ENCODE measurements at regions of chr6 and their contacts with region 1.

Region 1: DNA sequence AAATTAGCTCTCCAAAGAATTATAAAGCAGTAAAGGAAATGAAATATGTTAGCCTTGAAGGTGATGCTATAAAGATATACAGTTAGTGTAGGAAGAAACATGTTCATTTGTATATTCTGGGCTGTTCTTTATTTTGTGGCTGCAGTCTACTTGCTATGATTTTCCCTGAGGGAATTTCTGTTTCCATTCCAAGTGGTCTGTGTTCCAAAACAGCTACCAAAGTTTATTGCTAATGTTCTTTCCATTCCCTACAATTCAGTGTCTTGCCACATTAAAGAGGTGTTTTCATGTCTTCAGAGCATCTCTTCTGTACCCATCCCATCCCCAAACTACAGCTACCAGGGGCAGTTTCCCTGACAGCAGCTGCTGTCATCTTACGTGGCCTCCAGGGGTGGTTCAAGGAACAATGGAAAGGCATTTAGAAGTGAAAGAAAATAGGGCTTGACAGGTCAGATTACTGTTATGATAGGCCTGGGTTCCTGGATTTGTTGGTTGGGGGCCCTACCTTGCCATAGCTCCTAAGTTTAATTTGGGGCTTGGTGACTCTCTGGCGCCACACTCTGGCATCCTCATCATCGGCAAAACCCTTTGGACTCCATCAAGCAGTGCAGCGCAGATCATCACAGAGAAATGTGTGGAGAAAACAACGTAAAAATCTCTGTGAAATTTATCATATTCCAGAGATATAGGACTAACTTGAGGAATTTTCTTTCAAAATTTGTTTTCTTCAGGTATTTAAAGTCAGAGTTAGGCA is 33.8 kb upstream of the AIG1 start:
- DNase-seq: peak; percentile 35
- H3K4me3 ChIP-seq: no peak overlapping the region
- H3K27ac ChIP-seq: no peak overlapping the region
- H3K4me1 ChIP-seq: no peaks in the 10 kb centered on the region
- H3K27me3 ChIP-seq: no peaks in the 10 kb centered on the region
- CTCF ChIP-seq: peak; percentile 75

Region 2: DNA sequence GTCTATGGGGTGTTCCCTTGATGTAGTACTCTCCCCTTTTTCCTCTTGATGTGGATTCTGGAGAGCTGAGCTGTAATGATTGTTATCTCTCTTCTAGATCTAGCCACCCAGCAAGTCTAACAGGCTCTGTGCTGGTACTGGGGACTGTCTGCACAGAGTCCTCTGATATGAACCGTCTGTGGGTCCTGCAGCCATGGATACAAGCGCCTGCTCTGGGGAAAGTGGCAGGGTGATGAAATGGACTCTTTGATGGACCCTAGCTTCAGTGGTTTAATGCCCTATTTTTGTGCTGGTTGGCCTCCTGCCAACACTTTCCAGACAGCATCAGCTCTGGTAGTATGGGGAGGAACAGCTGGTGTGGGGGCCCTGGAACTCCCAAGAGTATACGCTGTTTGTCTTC is 508.8 kb before region 1 on chr6:
- CTCF ChIA-PET with region 1: no interaction called
- POLR2A ChIA-PET with region 1: no interaction called
- intact Hi-C with region 1: no loop called
- DNase-seq: peak; percentile 7
- H3K4me3 ChIP-seq: no peak overlapping the region
- H3K27ac ChIP-seq: no peak overlapping the region
- H3K4me1 ChIP-seq: no peaks in the 10 kb centered on the region
- H3K27me3 ChIP-seq: no peaks in the 10 kb centered on the region
- CTCF ChIP-seq: no peak

Region 3: GRCh38 chr6:142566628-142567396 is 460.1 kb before region 1 on chr6:
- CTCF ChIA-PET with region 1: no interaction called
- POLR2A ChIA-PET with region 1: no interaction called
- intact Hi-C with region 1: loop called (anchors 2 kb)
- DNase-seq: peak; percentile 77
- H3K4me3 ChIP-seq: no peak overlapping the region
- H3K27ac ChIP-seq: no peak overlapping the region
- H3K4me1 ChIP-seq: no peaks in the 10 kb centered on the region
- H3K27me3 ChIP-seq: peaks cover 3% of the 10 kb centered on the region
- CTCF ChIP-seq: peak; percentile 90

Region 4: GRCh38 chr6:142746524-142746923 is 280.3 kb before region 1 on chr6:
- CTCF ChIA-PET with region 1: no interaction called
- POLR2A ChIA-PET with region 1: no interaction called
- intact Hi-C with region 1: loop called (anchors 5 kb)
- DNase-seq: peak; percentile 56
- H3K4me3 ChIP-seq: no peak overlapping the region
- H3K27ac ChIP-seq: no peak overlapping the region
- H3K4me1 ChIP-seq: no peaks in the 10 kb centered on the region
- H3K27me3 ChIP-seq: no peaks in the 10 kb centered on the region
- CTCF ChIP-seq: peak; percentile 48